ENCODE measurements at regions of chr17 and their contacts with region 1.

Region 1: DNA sequence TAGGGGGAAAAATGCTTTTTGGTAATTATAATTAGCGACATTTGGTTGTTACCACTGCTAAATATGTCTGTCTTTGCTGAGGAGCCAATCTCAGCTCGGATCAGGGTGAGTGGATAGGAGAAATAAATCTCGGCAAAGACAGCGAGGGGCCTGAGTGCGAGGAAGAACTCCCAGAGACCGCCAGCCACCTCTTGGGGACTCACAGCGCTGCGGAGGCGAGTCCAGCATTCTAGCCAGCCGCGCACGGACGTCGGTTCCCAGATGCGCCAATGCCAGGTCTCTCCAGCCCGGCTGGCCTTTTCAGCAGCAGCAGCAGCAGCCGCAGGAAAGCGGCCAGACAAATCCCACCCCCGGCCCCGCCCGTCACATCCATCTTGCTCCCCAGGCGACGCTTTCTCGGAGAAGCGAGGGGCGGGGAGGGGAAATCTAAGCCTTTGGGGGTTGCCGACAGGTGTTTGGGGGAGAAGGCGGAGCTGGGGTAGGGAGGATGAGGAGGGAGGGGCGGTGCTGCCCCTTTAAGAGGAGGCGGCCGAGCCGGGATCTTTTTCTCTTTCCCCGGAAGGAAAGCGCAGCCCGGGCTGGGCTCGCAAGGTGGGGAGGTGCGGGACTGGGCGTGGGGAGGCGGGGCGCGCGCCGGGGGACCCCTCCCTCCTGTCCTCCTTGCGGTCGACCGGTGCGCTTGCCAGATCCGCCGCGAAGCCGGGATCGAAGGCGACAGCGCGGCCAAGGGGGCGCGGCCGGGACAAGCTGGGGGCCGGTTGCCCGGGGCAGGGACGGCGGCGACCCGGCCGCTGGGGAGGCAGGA is at the start of gene ITGA3:
- DNase-seq: peak; percentile 96 to 97
- H3K4me3 ChIP-seq: peak within 1 kb of the TSS; percentile 79
- H3K27ac ChIP-seq: peak within 1 kb of the TSS; percentile 97
- H3K4me1 ChIP-seq: peaks cover 69% of the 10 kb centered on the region
- H3K27me3 ChIP-seq: no peaks in the 10 kb centered on the region
- CTCF ChIP-seq: peak; percentile 12; the same call in 1 of the 2 replicates
- total RNA-seq, gene ITGA3: 291 and 327 TPM in 2 replicates

Region 2: DNA sequence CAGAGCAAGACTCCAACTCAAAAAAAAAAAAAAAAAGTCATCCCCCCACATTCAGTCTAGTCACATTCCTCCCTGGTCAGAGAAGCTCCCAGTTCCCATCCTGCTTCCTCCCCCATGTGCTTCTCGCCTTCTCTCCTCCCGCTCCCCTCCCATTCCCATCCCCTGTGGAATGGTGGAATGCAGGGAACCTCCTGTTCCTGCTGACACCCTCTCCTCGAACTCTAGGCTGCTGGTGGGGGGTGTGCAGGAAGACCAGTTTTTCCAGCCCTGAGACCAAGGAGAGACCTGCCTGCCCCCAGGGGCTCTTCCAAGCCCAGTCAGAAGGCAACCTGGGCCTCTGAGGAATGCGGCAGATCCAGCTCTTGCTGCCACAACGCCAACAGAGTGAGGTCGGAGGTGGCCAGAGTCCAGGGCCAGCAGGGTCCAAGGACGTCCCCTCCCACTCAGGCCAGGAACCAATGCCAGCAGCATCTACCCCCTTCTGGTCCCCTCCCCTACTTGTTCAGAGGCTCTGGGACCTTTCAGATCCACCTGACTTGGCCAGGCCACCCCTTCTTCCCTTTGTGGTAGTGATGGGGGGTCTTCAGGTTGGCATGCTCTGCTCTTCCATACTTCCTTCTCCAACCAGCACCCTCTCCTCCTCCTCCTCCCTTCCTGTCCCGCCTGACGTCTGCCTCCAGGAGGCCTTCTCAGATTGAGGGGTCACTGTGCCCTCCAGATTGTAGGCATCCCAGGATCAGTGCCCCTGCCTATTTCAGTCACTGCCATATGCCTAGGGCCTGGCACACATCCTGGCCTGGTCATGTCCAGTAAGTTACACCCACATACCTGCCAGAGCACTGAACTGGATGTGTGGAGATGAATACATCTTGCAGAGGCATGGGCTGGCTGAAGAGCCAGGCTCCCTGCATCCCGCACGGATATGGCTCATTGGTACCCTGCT is 168.3 kb before region 1 on chr17:
- CTCF ChIA-PET with region 1: no interaction called
- POLR2A ChIA-PET with region 1: no interaction called
- intact Hi-C with region 1: loop called (anchors 1 kb)
- DNase-seq: peak; percentile 97 to 100
- H3K4me3 ChIP-seq: peak overlapping the region; percentile 29; the same call in 1 of the 2 replicates
- H3K27ac ChIP-seq: peak overlapping the region; percentile 88
- H3K4me1 ChIP-seq: peaks cover 67% of the 10 kb centered on the region
- H3K27me3 ChIP-seq: no peaks in the 10 kb centered on the region
- CTCF ChIP-seq: no peak

Region 3: GRCh38 chr17:50026901-50027630 is 28.6 kb before region 1 on chr17:
- CTCF ChIA-PET with region 1: interaction called, 13 read pairs
- POLR2A ChIA-PET with region 1: interaction called, 55 read pairs
- intact Hi-C with region 1: loop called (anchors 1 kb)
- DNase-seq: peak; percentile 93 to 94
- H3K4me3 ChIP-seq: peak overlapping the region; percentile 58
- H3K27ac ChIP-seq: peak overlapping the region; percentile 96
- H3K4me1 ChIP-seq: peaks cover 54% of the 10 kb centered on the region
- H3K27me3 ChIP-seq: no peaks in the 10 kb centered on the region
- CTCF ChIP-seq: peak; percentile 99

Region 4: DNA sequence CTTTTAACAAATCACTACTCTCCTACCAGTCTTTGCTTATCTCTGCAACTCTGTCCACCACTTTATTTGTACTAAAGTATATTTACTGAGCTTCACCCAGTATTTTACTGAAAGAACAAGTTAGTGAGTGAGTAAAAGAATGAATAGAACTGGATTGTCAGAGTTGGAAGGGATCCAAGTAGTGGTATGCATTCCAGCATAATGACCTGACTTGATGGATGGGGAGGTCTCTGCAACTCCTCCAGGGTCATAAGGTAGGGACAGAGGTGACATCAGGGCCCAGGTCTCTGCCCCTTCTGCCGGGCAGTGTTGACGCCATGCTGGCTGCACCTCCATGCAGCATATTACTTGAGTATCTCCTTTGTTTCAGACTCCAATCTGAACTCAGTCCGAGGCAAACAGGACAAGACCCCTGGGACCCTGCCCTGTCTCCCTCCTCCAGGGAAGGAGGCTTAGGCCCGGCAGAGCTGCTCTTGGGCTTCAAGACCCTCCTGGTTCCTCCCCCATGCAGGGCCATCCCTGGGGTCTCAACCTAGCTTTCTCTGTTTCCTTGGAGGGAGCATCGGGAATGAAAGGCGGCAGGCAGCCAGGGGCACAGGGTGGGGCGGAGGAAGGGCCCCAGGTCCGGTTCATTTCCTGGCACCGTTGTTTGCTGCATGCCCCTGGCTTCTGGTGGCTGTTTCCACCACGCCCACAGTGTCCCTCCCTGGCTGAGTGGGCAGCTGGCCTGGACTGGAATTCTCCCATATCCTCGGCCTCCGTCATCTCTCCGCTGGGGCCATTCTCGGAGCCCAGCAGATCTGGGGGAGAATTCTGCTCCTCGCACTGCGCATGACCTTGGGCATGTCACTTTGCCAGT is 12.1 kb before region 1 on chr17:
- CTCF ChIA-PET with region 1: no interaction called
- POLR2A ChIA-PET with region 1: no interaction called
- intact Hi-C with region 1: loop called (anchors 1 kb)
- DNase-seq: peak; percentile 49 to 58
- H3K4me3 ChIP-seq: no peak overlapping the region
- H3K27ac ChIP-seq: no peak overlapping the region
- H3K4me1 ChIP-seq: peaks cover 39% of the 10 kb centered on the region
- H3K27me3 ChIP-seq: no peaks in the 10 kb centered on the region
- CTCF ChIP-seq: no peak

Region 5: GRCh38 chr17:50087246-50087911 is 31.8 kb after region 1 on chr17:
- CTCF ChIA-PET with region 1: no interaction called
- POLR2A ChIA-PET with region 1: interaction called, 4 read pairs
- intact Hi-C with region 1: loop called (anchors 2 kb)
- DNase-seq: peak; percentile 68 to 72
- H3K4me3 ChIP-seq: no peak overlapping the region
- H3K27ac ChIP-seq: no peak overlapping the region
- H3K4me1 ChIP-seq: no peaks in the 10 kb centered on the region
- H3K27me3 ChIP-seq: no peaks in the 10 kb centered on the region
- CTCF ChIP-seq: peak; percentile 97

Region 6: DNA sequence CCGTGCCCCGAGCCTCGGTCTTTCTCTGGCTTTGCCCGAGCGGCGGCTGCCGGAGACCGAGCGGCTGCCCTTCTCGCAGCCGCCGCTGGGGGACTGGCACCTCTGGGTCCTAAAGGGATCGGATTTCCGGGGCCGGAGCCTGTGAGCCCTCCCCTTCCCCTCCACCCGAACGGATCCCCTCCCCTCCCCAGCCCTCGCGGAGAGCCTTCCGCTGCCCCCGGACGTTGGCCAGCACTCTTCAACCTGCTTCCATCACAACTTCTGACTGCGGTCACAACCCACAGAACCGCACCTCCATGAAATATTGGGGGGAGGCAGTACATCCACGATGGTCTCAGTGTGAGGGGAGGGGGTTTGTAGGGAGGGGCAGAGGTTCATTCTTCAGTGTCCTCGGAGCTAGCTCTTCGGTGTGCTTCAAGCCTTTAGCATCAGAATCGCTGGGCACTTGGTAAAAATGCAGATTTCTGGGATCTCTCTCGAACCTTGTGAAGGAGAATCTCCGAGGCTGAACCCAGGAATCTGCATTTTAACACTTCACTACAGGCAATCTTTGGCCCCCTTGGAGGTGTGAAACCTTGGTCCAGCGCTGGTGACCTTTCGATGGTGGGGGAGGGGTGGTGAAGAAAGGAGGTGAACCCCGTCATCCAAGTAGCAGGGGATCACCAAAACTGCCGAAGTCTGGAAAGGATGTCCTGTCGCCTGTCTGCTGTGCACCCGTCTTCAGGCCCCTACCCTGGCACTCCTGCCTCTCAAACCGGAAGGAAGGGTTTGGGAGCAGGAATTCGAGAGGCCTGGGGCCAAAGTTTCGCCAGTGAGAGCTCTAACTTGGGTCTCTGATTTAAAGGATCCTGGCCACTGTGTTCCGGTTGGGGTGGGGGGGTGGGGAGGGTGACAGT is 95.7 kb after region 1 on chr17:
- CTCF ChIA-PET with region 1: no interaction called
- POLR2A ChIA-PET with region 1: interaction called, 22 read pairs
- intact Hi-C with region 1: no loop called
- DNase-seq: peak; percentile 85
- H3K4me3 ChIP-seq: peak overlapping the region; percentile 70
- H3K27ac ChIP-seq: peak overlapping the region; percentile 86
- H3K4me1 ChIP-seq: peaks cover 70% of the 10 kb centered on the region
- H3K27me3 ChIP-seq: no peaks in the 10 kb centered on the region
- CTCF ChIP-seq: peak; percentile 69

Region 7: DNA sequence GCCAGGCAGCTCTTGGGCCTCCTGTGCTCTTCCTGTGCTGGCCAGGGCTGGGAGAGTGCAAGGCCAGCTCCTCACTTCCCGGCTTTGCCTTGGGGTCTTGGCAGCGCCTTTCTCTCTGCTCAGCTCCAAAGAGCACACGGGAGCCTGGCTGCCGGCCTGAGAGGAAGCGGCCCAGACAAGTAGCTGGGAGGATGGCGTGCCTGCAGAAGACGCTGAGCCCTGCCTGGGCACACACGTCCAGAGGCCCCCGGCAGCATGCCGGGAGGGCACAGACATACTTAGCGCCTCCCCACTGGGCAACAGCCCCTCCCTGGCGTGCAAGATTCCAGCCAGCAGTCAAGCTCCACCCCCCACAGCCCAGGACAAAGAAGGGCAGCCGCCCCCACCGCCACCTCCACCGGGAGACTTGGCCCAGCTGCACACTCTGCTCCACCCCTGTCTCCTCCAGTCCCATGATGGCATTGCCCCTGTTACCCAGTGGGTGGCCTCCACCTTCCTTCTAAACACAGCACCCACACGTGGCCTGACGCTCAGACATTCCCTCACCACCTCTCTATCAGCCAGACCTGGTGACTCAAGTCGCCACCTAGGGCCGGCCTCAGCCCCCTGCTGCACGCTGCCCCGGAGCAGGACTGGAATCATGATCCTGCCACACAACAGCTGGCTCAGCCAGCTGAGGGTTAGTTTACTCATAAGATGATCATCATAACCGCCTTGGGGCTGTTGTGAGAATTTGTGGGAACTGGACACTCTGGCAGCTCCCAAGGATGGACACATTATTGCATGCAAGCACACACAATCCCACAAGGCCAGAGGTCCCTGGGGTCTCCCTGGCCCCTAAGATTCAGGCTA is 122.6 kb after region 1 on chr17:
- CTCF ChIA-PET with region 1: no interaction called
- POLR2A ChIA-PET with region 1: interaction called, 15 read pairs
- intact Hi-C with region 1: no loop called
- DNase-seq: peak; percentile 92 to 93
- H3K4me3 ChIP-seq: peak overlapping the region; percentile 5; the same call in 1 of the 2 replicates
- H3K27ac ChIP-seq: peak overlapping the region; percentile 32
- H3K4me1 ChIP-seq: peaks cover 18% of the 10 kb centered on the region
- H3K27me3 ChIP-seq: no peaks in the 10 kb centered on the region
- CTCF ChIP-seq: peak; percentile 76